ENCODE measurements at regions of chr4 and their contacts with region 1.

Region 1: DNA sequence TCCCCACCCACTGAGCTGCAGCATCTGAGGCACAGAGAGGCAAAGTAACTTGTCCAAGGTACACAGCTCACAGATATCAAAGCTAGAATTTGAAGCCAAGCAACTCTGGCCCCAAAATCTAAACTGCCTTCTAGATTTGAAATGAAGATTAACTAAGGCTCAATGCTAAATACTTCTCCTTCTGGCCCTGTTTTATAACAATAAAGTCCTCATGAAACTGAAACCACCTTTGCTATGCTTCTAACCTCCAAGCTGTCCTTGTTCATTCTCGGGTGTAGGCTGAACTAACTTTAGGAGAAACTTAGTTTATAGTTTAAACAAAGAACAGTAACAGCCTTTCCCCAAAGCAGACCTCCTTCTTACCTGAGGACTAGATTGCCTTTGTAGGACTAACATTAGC is 93.6 kb downstream of the DCTD start:
- DNase-seq: no peak
- ATAC-seq: no peak
- H3K4me3 ChIP-seq: no peak overlapping the region
- H3K27ac ChIP-seq: no peak overlapping the region
- H3K4me1 ChIP-seq: no peaks in the 10 kb centered on the region
- H3K27me3 ChIP-seq: no peaks in the 10 kb centered on the region
- CTCF ChIP-seq: no peak

Region 2: GRCh38 chr4:182507805-182508204 is 315.8 kb before region 1 on chr4:
- CTCF ChIA-PET with region 1: no interaction called
- POLR2A ChIA-PET with region 1: no interaction called
- in situ Hi-C with region 1: no loop called
- intact Hi-C with region 1: no loop called
- DNase-seq: no peak
- ATAC-seq: no peak
- H3K4me3 ChIP-seq: no peak overlapping the region
- H3K27ac ChIP-seq: no peak overlapping the region
- H3K4me1 ChIP-seq: no peaks in the 10 kb centered on the region
- H3K27me3 ChIP-seq: no peaks in the 10 kb centered on the region
- CTCF ChIP-seq: no peak

Region 3: DNA sequence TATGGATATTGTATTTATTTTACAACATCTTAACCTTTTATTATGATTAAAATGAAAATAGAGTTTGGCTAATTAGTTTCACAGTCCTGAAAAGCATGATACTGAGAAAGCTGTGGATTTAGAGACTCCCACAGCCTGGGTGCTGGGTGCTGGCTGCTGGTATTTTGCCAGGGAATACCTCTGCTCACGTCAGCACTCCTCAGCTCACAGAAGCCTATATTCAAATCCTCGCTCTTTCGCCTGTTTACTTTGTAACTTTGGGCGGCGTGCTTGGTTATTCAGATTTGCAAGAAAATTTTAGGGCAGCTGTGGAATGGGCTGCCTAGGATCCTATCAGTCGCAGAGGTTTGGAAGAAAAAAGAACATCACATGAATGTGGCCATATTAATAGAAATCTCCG is 168.2 kb before region 1 on chr4:
- CTCF ChIA-PET with region 1: interaction called, 13 read pairs
- POLR2A ChIA-PET with region 1: no interaction called
- in situ Hi-C with region 1: no loop called
- intact Hi-C with region 1: no loop called
- DNase-seq: no peak
- ATAC-seq: no peak
- H3K4me3 ChIP-seq: no peak overlapping the region
- H3K27ac ChIP-seq: no peak overlapping the region
- H3K4me1 ChIP-seq: no peaks in the 10 kb centered on the region
- H3K27me3 ChIP-seq: no peaks in the 10 kb centered on the region; the same call in 1 of the 2 replicates
- CTCF ChIP-seq: no peak